ENCODE measurements at regions of chr6 and their contacts with region 1.

Region 1: GRCh38 chr6:11952316-11952715 is 59.8 kb upstream of the HIVEP1 start:
- DNase-seq: no peak
- ATAC-seq: no peak
- H3K4me3 ChIP-seq: no peak overlapping the region
- H3K27ac ChIP-seq: no peak overlapping the region
- H3K4me1 ChIP-seq: no peaks in the 10 kb centered on the region
- H3K27me3 ChIP-seq: no peaks in the 10 kb centered on the region
- CTCF ChIP-seq: no peak
- POLR2A ChIP-seq: no peak

Region 2: GRCh38 chr6:11912426-11912825 is 39.9 kb before region 1 on chr6:
- in situ Hi-C with region 1: no loop called
- intact Hi-C with region 1: no loop called
- DNase-seq: no peak
- ATAC-seq: no peak
- H3K4me3 ChIP-seq: no peak overlapping the region
- H3K27ac ChIP-seq: no peak overlapping the region
- H3K4me1 ChIP-seq: no peaks in the 10 kb centered on the region
- H3K27me3 ChIP-seq: no peaks in the 10 kb centered on the region
- CTCF ChIP-seq: no peak
- POLR2A ChIP-seq: no peak

Region 3: GRCh38 chr6:12289933-12290820 is 337.9 kb after region 1 on chr6 and contains the start of gene EDN1:
- in situ Hi-C with region 1: no loop called
- intact Hi-C with region 1: loop called (anchors 10 kb)
- DNase-seq: peak; percentile 25 to 26
- ATAC-seq: peak; percentile 62 to 72
- H3K4me3 ChIP-seq: peak within 1 kb of the TSS; percentile 46 to 61 (median 56)
- H3K27ac ChIP-seq: peak within 1 kb of the TSS in 3 of 4 donors; percentile 55 to 73 (median 57)
- H3K4me1 ChIP-seq: peaks cover 3 to 7% of the 10 kb centered on the region in 2 donors
- H3K27me3 ChIP-seq: peaks cover 7 to 14% (median 12%) of the 10 kb centered on the region in 3 donors
- CTCF ChIP-seq: peak in 2 of 5 experiments; percentile 28 to 58
- POLR2A ChIP-seq: peak; percentile 37 to 48
- total RNA-seq, gene EDN1: 7.4 to 12.0 (median 9.3) TPM

Measured in gastrocnemius medialis (tissue), 4 donors.